Heart left ventricle (tissue), 16 donors: ENCODE measurements at regions of chr2 and their contacts with region 1.

Region 1: GRCh38 chr2:24490674-24491625 is at the start of gene NCOA1:
- DNase-seq: peak; percentile 92 to 96 (median 93)
- ATAC-seq: peak; percentile 85 to 96 (median 93)
- H3K4me3 ChIP-seq: peak within 1 kb of the TSS; percentile 74 to 98 (median 86)
- H3K27ac ChIP-seq: peak within 1 kb of the TSS; percentile 83 to 98 (median 94)
- H3K4me1 ChIP-seq: peaks cover 5 to 44% (median 31%) of the 10 kb centered on the region in 12 donors
- H3K27me3 ChIP-seq: no peaks in the 10 kb centered on the region
- CTCF ChIP-seq: peak in 9 of 12 donors; percentile 12 to 41 (median 25)
- POLR2A ChIP-seq: peak in 1 of 2 donors; percentile 30
- total RNA-seq, gene NCOA1: 23.9 to 42.3 (median 33.2) TPM

Region 2: DNA sequence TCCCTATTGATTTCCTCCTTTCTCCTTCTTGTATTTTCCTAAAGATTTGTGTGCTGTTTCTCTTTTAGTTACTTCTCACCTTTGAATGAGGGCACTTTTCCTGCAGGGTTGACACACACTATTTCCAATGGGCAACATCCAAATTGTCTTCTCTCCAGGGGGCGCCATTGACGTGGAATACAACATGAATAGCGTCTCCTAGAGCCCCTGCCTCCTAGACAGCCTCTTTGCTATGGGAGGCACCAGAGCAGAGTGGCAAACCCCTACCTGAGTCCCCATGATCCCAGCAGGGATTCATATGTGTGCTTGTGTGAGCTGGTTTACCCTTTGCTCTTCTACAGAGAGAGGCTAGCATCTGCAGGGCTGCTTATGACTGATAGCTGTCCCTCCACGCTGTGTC is 69.3 kb before region 1 on chr2:
- intact Hi-C with region 1: loop called in 4 of 10 experiments (anchors 5 to 10 kb)
- DNase-seq: peak in 4 of 5 donors; percentile 56 to 72 (median 62)
- ATAC-seq: peak; percentile 55 to 85 (median 72)
- H3K4me3 ChIP-seq: no peak overlapping the region
- H3K27ac ChIP-seq: no peak overlapping the region
- H3K4me1 ChIP-seq: peaks cover 0 to 2% (median 0%) of the 10 kb centered on the region in 12 donors
- H3K27me3 ChIP-seq: no peaks in the 10 kb centered on the region
- CTCF ChIP-seq: peak in 11 of 12 donors; percentile 36 to 73 (median 65)
- POLR2A ChIP-seq: no peak

Region 3: GRCh38 chr2:24435391-24436316 is 55.3 kb before region 1 on chr2:
- intact Hi-C with region 1: loop called in 4 of 10 experiments (anchors 2 to 5 kb)
- DNase-seq: peak in 4 of 5 donors; percentile 85 to 91 (median 87)
- ATAC-seq: peak; percentile 75 to 89 (median 87)
- H3K4me3 ChIP-seq: peak overlapping the region in 7 of 12 donors; percentile 11 to 30 (median 17)
- H3K27ac ChIP-seq: peak overlapping the region; percentile 40 to 80 (median 66)
- H3K4me1 ChIP-seq: peaks cover 4 to 50% (median 32%) of the 10 kb centered on the region in 12 donors
- H3K27me3 ChIP-seq: no peaks in the 10 kb centered on the region
- CTCF ChIP-seq: no peak
- POLR2A ChIP-seq: no peak

Region 4: DNA sequence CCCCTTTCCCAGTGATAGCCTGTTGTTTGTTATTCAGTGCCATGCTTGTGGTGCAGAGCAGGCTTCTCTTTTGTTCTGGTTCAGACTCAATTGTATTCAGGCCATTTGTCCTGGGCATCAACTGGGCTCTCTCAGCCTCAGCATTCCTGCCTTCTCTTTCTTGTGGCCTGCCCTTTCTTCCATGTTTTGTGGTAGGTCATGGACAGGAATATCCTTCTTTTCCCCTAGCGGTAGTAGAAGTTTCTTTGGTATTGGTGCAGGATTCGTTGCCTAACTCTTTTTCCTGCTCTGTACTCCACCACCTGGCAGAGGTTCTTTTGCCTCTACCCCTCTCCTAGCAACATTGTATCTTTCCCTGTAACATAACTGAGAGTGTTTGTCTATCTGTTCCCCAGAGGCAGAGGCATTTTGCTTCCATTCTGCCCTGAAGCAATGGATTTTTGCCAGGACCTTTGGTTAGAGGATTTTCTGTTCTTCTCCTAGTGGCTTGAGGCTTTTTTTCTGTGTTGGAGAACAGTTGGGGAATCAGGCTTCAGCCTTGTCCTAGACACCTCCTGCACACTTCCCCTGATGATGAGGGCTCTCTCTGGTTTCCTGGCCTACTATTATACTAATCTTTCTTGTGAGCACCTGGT is 68.6 kb after region 1 on chr2:
- intact Hi-C with region 1: loop called in 1 of 10 experiments (anchors 5 kb)
- DNase-seq: no peak
- ATAC-seq: peak in 3 of 4 donors; percentile 29 to 72 (median 69)
- H3K4me3 ChIP-seq: no peak overlapping the region
- H3K27ac ChIP-seq: peak overlapping the region in 2 of 12 donors; percentile 13 to 19
- H3K4me1 ChIP-seq: peaks cover 0 to 43% (median 21%) of the 10 kb centered on the region in 12 donors
- H3K27me3 ChIP-seq: no peaks in the 10 kb centered on the region
- CTCF ChIP-seq: no peak
- POLR2A ChIP-seq: no peak

Region 5: GRCh38 chr2:24635181-24635580 is 144.2 kb after region 1 on chr2:
- intact Hi-C with region 1: no loop called
- DNase-seq: no peak
- ATAC-seq: no peak
- H3K4me3 ChIP-seq: no peak overlapping the region
- H3K27ac ChIP-seq: no peak overlapping the region
- H3K4me1 ChIP-seq: peaks cover 0 to 13% (median 0%) of the 10 kb centered on the region in 12 donors
- H3K27me3 ChIP-seq: no peaks in the 10 kb centered on the region
- CTCF ChIP-seq: no peak
- POLR2A ChIP-seq: no peak

Region 6: DNA sequence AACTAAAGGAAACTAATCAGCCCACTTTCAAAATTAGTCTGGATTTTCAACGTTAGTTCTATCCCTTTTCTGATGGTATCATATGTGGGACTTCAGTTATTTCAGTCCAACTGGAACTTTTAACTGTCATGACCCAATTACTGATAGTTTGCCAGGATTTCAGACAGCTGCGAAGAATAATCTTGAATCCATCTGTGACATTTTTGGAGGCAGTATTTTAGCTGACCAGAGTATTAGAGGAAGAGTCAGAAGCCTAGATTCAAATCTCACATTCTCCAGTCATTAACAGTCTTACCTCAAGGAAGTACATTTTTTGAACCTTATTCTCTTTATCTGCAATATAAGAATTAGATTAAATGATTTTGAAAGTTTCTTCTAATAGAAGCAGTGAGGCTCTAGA is 220.9 kb after region 1 on chr2:
- intact Hi-C with region 1: loop called in 1 of 10 experiments (anchors 10 kb)
- DNase-seq: no peak
- ATAC-seq: peak in 1 of 4 donors; percentile 16
- H3K4me3 ChIP-seq: no peak overlapping the region
- H3K27ac ChIP-seq: no peak overlapping the region
- H3K4me1 ChIP-seq: peaks cover 0 to 12% (median 0%) of the 10 kb centered on the region in 12 donors
- H3K27me3 ChIP-seq: no peaks in the 10 kb centered on the region
- CTCF ChIP-seq: no peak
- POLR2A ChIP-seq: no peak

Region 7: GRCh38 chr2:24792874-24793760 is 302.2 kb after region 1 on chr2 and contains the starts of genes CENPO and PTRHD1:
- intact Hi-C with region 1: loop called in 2 of 10 experiments (anchors 2 to 5 kb)
- DNase-seq: peak; percentile 95 to 98 (median 97)
- ATAC-seq: peak; percentile 98 to 99 (median 99)
- H3K4me3 ChIP-seq: peak within 1 kb of the TSS; percentile 30 to 97 (median 74)
- H3K27ac ChIP-seq: peak within 1 kb of the TSS; percentile 90 to 100 (median 98)
- H3K4me1 ChIP-seq: peaks cover 0 to 25% (median 5%) of the 10 kb centered on the region in 12 donors
- H3K27me3 ChIP-seq: no peaks in the 10 kb centered on the region
- CTCF ChIP-seq: peak; percentile 40 to 73 (median 62)
- POLR2A ChIP-seq: peak in 1 of 2 donors; percentile 62
- total RNA-seq, gene CENPO: 1.6 to 9.2 (median 2.7) TPM
- total RNA-seq, gene PTRHD1: 12.6 to 37.1 (median 31.1) TPM